Posterior cingulate gyrus (tissue), 11 donors: ENCODE measurements at regions of chr4 and their contacts with region 1.

Region 1: DNA sequence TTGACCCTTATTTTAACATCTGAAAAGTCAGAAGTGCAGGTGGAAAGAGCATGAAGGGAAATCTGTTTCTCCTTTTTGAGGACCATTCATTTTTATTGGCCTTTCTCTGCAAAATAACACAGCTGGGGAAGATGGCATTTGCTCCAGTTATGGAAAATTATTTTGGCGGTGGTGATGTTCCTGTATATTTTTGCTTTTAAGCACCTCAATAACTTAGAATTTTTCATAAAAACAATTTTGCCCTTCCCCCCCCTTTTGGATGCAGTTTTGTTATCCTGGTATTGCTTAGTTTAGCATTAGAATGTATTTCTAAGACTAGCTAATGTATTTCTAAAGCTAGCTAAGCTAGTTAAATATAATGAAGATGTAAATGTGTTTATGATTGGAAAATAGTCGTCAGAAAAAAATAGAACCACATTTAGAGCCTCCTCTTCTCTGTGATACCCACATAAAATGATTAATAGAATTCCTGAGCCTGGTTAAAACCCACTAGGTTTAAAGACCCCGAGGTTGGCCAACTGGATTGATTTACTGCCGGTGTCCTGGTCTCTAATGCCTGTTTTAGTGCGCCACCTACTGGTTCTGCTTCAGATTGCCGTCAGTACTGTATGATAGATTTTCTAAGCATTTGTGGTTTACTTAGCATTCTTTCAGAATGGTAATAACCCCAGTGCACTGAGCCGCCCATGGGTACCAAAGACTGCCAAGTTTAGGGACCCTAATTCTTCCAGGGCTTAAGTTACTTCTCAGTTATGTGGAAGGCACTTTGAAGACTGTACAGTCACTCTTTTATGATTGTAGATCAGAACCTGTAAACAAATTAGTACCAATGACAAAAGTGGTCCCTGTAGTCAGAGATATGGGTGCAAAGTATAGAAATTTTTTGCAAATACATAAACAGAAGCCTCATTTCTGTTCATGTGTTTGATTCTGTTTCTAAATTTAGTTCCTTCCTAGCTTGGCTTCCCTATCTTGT is 11.4 kb downstream of the KLF3 start:
- DNase-seq: peak in 8 of 10 donors; percentile 49 to 93 (median 82)

Region 2: GRCh38 chr4:38030023-38030422 is 645.4 kb before region 1 on chr4:
- intact Hi-C with region 1: no loop called
- DNase-seq: no peak

Region 3: GRCh38 chr4:38730830-38731646 is 55.6 kb after region 1 on chr4:
- intact Hi-C with region 1: loop called (anchors 5 kb)
- DNase-seq: peak; percentile 31 to 96 (median 82)

Region 4: DNA sequence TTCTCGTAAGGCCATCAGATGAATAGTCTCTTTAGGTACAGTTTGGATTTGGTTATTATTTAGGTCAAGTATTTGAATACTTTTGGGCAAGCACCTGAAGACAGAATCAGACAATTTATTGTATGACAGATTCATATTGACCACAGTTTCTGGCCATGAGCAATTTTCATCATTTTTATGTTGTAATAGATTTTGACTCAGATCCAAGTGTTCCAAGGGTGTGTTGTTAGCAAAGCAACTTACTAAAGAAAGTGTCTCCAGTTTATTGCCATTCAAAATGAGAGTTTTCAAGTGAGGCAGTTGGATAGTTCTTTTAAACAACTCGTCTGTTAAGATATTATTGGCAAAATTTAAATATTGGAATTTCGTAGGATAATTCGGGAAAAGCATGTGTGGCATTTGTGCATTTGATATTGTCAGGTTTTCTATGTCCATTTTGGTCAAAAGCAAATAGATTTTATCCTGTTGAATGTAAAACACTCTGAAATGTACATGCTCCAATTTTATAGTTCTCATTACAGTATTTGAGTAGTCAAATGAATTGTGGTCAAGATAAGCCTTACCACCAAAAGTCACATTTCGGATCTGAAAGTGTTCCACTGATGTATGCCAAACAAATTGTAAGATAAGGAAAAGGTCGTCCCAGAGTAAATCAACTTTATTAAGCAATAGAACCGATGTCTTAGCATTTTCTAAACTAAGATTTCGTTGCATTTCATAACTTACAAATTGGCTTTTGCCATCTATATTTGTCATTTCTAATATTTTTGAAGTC is 98.9 kb after region 1 on chr4:
- intact Hi-C with region 1: no loop called
- DNase-seq: no peak